Heart right ventricle (tissue), 16 donors: ENCODE measurements at regions of chr22 and their contacts with region 1.

Region 1: GRCh38 chr22:43142880-43143562 is at the start of gene MCAT:
- DNase-seq: peak; percentile 82 to 86
- ATAC-seq: peak; percentile 92 to 96 (median 94)
- H3K4me3 ChIP-seq: peak within 1 kb of the TSS; percentile 80 to 100 (median 96)
- H3K27ac ChIP-seq: peak within 1 kb of the TSS in 9 of 10 donors; percentile 50 to 91 (median 71)
- H3K4me1 ChIP-seq: peaks cover 7 to 34% (median 19%) of the 10 kb centered on the region in 9 donors
- H3K27me3 ChIP-seq: no peaks in the 10 kb centered on the region
- CTCF ChIP-seq: no peak
- total RNA-seq, gene MCAT: 12.8 to 18.2 (median 15.2) TPM

Region 2: GRCh38 chr22:43088979-43089717 is 53.9 kb before region 1 on chr22 and contains the start of gene TTLL1:
- intact Hi-C with region 1: loop called in 1 of 10 experiments (anchors 10 kb)
- DNase-seq: peak; percentile 88 to 91
- ATAC-seq: peak; percentile 91 to 96 (median 95)
- H3K4me3 ChIP-seq: peak within 1 kb of the TSS; percentile 51 to 100 (median 80)
- H3K27ac ChIP-seq: peak within 1 kb of the TSS in 9 of 10 donors; percentile 40 to 83 (median 71)
- H3K4me1 ChIP-seq: peaks cover 0 to 37% (median 15%) of the 10 kb centered on the region in 9 donors
- H3K27me3 ChIP-seq: no peaks in the 10 kb centered on the region
- CTCF ChIP-seq: peak in 3 of 9 donors; percentile 6 to 27 (median 14)
- total RNA-seq, gene TTLL1: 7.2 to 14.5 (median 11.0) TPM

Region 3: DNA sequence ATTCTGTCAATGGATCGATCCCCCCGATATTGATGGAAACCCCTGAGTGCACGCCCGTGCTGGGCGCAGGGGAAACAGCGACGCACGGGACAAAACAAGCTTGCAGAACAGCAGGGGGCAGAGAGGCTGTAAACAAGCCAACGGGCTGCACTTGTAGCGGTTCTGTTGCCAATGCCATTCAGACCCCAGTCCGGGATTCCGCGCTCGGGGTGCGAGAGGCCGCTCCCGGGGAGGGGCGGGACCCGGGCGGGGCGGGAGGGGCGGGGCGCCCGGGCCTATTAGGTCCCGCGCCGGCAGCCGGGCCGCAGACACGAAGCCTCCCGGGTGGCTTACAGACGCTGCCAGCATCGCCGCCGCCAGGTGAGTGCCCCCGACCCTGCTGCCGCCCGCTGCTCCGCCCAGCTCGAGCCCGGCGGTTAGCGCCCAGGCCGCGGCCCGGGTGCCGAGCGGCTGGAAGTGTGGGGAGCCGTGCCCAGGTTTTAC is 32.5 kb before region 1 on chr22 and contains the start of gene BIK:
- intact Hi-C with region 1: loop called in 1 of 10 experiments (anchors 1 kb)
- DNase-seq: peak in 1 of 2 donors; percentile 38
- ATAC-seq: peak; percentile 42 to 69 (median 56)
- H3K4me3 ChIP-seq: peak within 1 kb of the TSS; percentile 31 to 70 (median 58)
- H3K27ac ChIP-seq: peak within 1 kb of the TSS in 1 of 10 donors; percentile 44
- H3K4me1 ChIP-seq: peaks cover 9 to 26% (median 16%) of the 10 kb centered on the region in 9 donors
- H3K27me3 ChIP-seq: peaks cover 0 to 54% (median 33%) of the 10 kb centered on the region in 7 donors
- CTCF ChIP-seq: peak in 5 of 9 donors; percentile 21 to 49 (median 44)
- total RNA-seq, gene BIK: 0.32 to 0.81 (median 0.57) TPM in 5 of 10 donors, not detected in the others